Activated T-helper 2 cell treated with anti-CD3 and anti-CD28 coated beads, Interferon-gamma antibody, Interleukin-2, Interleukin-4, amounts not matched to agents 10 μg/mL and 5 μg/mL and 100 μg/mL, durations not matched to agents 14 hours and 24 hours and 36 hours (primary cell): ENCODE measurements at regions of chr1 and their contacts with region 1.

Region 1: GRCh38 chr1:12619792-12620487 is 1.9 kb upstream of the DHRS3 start:
- DNase-seq: peak; percentile 73
- H3K4me3 Mint-ChIP-seq: peak overlapping the region; percentile 98
- H3K27ac Mint-ChIP-seq: no peak overlapping the region
- H3K4me1 Mint-ChIP-seq: peaks cover 37% of the 10 kb centered on the region
- H3K27me3 Mint-ChIP-seq: no peaks in the 10 kb centered on the region

Region 2: DNA sequence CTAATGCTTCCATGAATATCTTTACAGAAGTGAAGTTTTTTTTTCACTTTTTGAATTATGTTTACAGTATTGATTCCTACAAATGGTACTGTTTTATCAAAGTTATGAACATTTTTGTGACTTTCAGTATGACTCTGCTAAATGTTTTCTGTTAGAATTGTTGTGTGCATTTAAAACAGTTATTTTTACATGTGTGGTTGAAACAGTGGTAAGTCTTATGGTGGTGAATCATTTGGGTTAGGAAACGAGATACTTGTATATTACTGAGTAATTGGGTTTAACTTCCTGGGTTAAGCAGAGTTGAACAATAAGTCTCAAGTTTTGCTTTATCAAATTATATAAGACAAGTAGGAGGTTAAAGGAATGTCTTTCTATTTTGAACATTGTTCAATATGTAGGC is 323.3 kb before region 1 on chr1:
- intact Hi-C with region 1: loop called (anchors 5 kb)
- DNase-seq: no peak
- H3K4me3 Mint-ChIP-seq: peak overlapping the region; percentile 17
- H3K27ac Mint-ChIP-seq: peak overlapping the region; percentile 63
- H3K4me1 Mint-ChIP-seq: peaks cover 40% of the 10 kb centered on the region
- H3K27me3 Mint-ChIP-seq: no peaks in the 10 kb centered on the region

Region 3: DNA sequence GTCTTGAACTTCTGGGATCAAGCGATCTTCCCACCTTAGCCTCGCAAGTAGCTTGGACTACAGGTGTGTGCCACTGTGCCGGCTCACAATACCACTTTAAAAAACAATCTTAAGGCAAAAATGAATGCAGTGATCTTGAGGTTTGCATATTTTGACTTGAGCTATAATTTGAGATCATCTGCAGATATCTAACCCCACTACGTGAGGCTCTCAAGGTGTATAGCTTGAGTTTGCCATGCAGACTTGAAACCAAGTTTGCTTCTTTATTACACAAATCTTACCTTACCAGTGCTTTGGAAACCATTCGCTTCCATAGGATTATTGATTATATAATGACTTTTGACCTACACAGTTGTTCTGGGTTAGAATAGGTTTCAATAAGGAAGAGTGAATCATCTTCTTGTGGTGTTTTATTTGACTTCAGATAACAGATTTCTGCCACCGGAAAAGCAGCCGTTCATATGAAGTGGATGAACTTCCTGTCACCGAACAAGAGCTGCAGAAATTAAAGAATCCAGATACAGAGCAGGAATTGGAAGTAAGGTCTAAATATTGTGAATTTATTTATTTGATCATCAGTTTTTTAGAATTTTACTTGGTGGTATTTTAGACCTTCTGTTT is 235.0 kb before region 1 on chr1:
- intact Hi-C with region 1: loop called (anchors 2 kb)
- DNase-seq: peak; percentile 22
- H3K4me3 Mint-ChIP-seq: no peak overlapping the region
- H3K27ac Mint-ChIP-seq: peak overlapping the region; percentile 36
- H3K4me1 Mint-ChIP-seq: peaks cover 42% of the 10 kb centered on the region
- H3K27me3 Mint-ChIP-seq: no peaks in the 10 kb centered on the region

Region 4: DNA sequence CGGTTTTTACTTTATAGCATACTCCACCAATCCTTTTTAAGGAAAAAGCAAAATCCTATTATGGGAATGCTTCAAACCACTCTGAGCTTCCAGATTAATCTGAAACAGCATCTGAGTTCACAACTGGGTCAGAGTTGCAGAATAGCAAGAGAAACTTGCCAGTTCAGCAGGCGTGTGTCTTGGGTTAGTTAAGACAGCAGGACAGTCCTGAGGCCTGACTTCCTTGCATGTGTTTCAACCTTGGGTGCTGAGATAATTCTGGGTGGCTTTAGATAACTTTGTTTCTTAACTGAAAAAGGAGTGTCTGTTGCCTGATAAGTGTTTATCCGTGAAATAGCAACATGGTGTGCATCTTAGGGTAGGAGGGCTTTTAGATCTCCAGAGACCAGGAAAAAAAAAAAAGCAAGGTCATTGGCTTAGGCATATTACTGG is 171.2 kb before region 1 on chr1:
- intact Hi-C with region 1: loop called (anchors 1 kb)
- DNase-seq: no peak
- H3K4me3 Mint-ChIP-seq: peak overlapping the region; percentile 60
- H3K27ac Mint-ChIP-seq: peak overlapping the region; percentile 96
- H3K4me1 Mint-ChIP-seq: peaks cover 72% of the 10 kb centered on the region
- H3K27me3 Mint-ChIP-seq: peaks cover 2% of the 10 kb centered on the region

Region 5: DNA sequence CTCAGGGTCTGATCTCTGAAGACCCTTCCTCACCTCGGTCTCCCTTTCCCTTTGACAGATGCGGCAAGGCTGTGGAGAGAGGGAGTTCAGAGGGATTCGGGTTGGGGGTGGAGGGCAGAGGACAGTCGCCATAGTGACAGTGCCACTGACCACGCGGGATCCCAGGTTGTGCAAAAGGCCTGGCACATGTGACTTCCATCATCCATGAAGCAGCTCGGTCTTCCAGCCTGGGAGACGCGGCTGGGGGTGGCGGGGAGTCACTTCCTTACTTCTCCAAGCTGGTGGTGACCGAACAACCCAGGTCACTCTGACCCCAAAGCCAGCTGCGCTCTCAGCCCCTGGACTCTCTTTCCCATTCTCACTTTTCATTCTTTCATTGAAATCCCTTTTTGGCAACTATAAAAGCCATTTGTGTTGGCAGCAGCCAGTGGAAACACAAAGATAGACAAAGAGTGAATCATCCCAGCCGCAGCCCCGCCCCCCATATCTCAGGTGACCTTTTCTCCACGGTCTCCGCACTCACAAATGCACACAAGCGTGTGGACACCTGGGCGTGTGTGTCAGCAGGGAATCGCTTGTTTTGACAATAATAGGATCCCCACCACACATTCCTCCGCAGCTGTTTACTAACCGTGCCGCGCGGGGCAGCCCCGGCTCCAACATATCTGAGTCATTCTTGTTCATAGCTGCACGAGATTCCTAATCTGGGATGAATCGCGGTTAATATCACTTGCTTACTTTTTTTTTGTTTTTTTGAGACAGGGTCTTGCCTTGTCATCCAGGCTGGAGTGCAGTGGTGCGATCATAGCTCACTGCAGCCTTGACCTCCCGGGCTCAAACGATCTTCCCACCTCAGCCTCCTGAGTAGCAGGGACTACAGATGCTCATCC is 70.2 kb before region 1 on chr1:
- intact Hi-C with region 1: no loop called
- DNase-seq: no peak
- H3K4me3 Mint-ChIP-seq: no peak overlapping the region
- H3K27ac Mint-ChIP-seq: no peak overlapping the region
- H3K4me1 Mint-ChIP-seq: peaks cover 12% of the 10 kb centered on the region
- H3K27me3 Mint-ChIP-seq: no peaks in the 10 kb centered on the region

Region 6: DNA sequence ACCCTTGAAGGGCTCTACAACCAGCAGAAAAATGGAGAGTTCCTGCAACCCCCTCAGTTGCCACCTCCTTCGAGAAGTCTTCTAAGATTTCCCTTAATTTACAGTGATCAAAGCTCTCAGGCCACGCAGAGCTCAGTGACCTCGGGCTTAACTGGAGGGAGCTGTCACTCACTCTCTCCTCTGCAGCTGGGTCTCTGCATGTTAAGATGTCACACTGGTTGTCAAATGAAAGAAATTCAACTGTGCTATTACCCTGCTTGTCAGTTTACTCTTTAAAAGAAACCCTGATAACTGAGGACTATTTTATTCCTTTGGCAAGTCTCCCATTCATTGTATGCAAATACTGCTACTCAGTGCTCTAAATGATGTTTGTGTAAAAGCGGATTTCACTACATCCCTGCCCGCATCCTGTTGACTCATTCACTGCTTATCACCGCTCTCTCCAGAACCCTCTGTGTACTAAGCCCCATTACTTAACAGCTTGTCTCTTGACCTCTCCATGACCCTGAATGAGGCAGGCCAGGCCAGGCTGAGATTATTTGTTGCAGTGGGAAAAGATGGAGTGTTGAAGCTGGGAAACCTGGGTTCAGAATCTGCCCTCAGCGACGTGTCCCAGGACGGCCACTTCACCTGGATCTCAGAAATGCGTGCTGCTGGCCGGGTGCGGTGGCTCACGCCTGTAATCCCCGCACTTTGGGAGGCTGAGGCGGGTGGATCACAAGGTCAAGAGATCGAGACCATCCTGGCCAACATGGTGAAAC is 15.6 kb before region 1 on chr1:
- intact Hi-C with region 1: loop called (anchors 1 kb)
- DNase-seq: peak; percentile 47
- H3K4me3 Mint-ChIP-seq: peak overlapping the region; percentile 18
- H3K27ac Mint-ChIP-seq: peak overlapping the region; percentile 54
- H3K4me1 Mint-ChIP-seq: peaks cover 35% of the 10 kb centered on the region
- H3K27me3 Mint-ChIP-seq: no peaks in the 10 kb centered on the region

Region 7: DNA sequence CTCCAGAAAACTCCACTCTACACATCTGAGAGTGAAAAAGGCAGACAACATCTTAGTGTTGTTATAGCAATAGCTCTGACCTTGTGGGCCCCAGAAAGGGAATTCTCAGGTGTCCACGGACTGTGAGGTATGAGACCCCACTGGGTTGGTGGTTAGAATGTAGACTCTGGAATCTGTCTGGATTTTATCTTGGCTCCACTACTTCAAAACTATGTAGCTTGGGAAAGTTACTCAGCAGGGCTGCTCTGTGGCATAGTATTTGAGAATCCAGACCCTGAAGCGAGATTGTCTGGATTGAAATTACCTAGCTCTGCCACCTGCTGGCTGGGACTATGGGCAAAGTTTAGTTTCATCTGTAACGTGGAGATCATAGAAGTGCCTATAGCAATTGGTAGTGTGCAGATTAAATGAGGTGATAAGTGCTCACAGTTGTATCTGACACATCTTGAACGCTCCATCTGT is 1105.8 kb after region 1 on chr1:
- intact Hi-C with region 1: no loop called
- DNase-seq: peak; percentile 27
- H3K4me3 Mint-ChIP-seq: no peak overlapping the region
- H3K27ac Mint-ChIP-seq: no peak overlapping the region
- H3K4me1 Mint-ChIP-seq: peaks cover 27% of the 10 kb centered on the region
- H3K27me3 Mint-ChIP-seq: no peaks in the 10 kb centered on the region